PC-3 (cell line): ENCODE measurements at regions of chr1 and their contacts with region 1.

Region 1: DNA sequence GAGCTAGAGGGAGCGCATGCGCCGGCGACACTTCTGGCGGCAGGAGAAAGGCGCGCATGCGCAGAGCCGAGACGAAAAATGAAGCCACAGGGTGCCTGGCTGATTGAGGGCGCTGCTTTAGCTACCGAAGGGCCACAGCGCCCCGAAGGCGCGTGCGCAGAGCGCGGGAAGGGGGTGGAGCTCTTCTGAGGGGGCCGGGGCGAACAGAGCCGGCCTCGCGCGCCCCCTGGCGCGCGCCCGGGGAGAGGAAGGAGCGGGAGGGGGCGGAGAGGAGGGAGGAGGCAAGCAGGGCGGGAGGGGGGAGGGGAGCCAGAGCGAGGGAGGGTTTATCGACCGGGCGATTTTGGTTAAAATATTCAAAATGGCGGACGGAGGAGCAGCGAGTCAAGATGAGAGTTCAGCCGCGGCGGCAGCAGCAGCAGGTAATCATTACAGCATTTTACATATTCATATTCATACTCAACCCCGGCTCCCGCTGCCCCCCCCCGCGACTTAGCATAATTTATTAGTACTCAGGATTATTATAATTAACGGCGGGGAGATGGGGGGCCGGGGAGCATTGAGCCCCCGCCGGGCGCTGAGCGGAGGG is at the start of gene POU2F1:
- DNase-seq: peak; percentile 100
- ATAC-seq: peak; percentile 76
- H3K4me3 ChIP-seq: peak within 1 kb of the TSS; percentile 94
- H3K27ac ChIP-seq: peak within 1 kb of the TSS; percentile 97
- H3K4me1 ChIP-seq: peaks cover 28% of the 10 kb centered on the region
- H3K27me3 ChIP-seq: no peaks in the 10 kb centered on the region
- CTCF ChIP-seq: peak; percentile 69
- total RNA-seq, gene POU2F1: 8.7 and 17.9 TPM in 2 replicates

Region 2: DNA sequence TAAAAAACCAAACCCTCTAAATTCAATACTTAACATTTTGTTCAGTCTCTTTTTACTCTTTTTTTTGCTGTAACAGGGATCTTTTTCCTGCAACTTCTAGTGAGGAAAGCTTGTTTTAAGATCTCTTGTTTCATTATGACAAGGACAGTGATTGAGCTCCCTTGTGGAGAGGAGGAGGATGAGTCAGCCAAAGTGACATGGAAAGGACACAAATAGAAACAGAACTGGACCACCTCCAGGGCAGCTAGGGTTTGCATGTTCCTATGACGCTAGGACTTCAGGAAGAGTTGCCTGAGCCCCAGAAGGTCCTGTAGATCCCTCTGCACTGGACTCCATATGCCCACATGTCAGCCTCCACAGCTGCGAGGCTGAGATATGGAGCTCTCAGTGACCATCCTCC is 841.2 kb before region 1 on chr1:
- CTCF ChIA-PET with region 1: no interaction called
- POLR2A ChIA-PET with region 1: no interaction called
- intact Hi-C with region 1: no loop called
- DNase-seq: peak; percentile 37
- ATAC-seq: no peak
- H3K4me3 ChIP-seq: no peak overlapping the region
- H3K27ac ChIP-seq: no peak overlapping the region
- H3K4me1 ChIP-seq: peaks cover 6% of the 10 kb centered on the region; the same call in 1 of the 2 replicates
- H3K27me3 ChIP-seq: peaks cover 35% of the 10 kb centered on the region; the same call in 1 of the 2 replicates
- CTCF ChIP-seq: no peak

Region 3: DNA sequence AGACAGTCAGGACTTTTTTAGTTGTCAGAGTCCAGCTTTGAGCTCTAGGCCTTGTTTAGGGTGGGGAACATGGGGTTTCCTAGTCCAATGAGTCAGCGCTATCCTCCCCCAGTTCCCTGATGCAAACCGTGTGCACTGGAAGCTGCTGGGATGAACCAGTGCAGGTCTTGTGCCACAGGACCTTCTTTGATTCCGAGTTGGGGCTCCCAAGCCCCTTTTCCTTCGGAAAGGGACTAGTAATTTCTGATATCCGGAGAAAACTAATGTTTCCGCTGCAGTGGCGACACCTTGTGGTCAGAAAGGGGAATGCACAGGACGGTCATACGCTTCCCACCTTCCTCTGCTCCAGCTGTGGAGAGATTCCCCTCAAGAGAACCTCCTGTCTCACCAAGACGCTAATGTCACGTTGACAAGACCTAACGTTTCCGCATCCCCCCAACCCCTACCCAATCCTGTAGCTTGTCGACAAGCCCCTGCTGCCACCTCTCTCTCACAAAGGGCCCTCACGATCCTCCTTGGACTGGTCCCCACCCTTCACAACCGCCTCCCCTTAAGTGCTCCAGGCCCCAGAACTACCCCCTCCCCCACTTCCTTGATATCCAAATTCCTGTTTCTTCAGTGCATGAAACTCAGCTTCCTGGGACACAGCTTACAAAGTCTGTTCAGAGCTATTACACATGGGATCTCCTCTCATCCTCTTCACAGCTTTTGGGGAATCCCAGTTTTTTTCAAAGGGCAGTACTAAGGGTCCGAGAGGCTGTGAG is 161.4 kb before region 1 on chr1:
- CTCF ChIA-PET with region 1: interaction called, 16 read pairs
- POLR2A ChIA-PET with region 1: interaction called, 3 read pairs
- intact Hi-C with region 1: no loop called
- DNase-seq: peak; percentile 90
- ATAC-seq: peak; percentile 52
- H3K4me3 ChIP-seq: peak overlapping the region; percentile 28; the same call in 1 of the 2 replicates
- H3K27ac ChIP-seq: no peak overlapping the region
- H3K4me1 ChIP-seq: peaks cover 14% of the 10 kb centered on the region
- H3K27me3 ChIP-seq: no peaks in the 10 kb centered on the region
- CTCF ChIP-seq: peak; percentile 97

Region 4: GRCh38 chr1:167095368-167095767 is 125.3 kb before region 1 on chr1:
- CTCF ChIA-PET with region 1: interaction called, 10 read pairs
- POLR2A ChIA-PET with region 1: no interaction called
- intact Hi-C with region 1: no loop called
- DNase-seq: peak; percentile 96
- ATAC-seq: peak; percentile 89
- H3K4me3 ChIP-seq: peak overlapping the region; percentile 5; the same call in 1 of the 2 replicates
- H3K27ac ChIP-seq: peak overlapping the region; percentile 10; the same call in 1 of the 2 replicates
- H3K4me1 ChIP-seq: peaks cover 20% of the 10 kb centered on the region
- H3K27me3 ChIP-seq: no peaks in the 10 kb centered on the region
- CTCF ChIP-seq: no peak

Region 5: DNA sequence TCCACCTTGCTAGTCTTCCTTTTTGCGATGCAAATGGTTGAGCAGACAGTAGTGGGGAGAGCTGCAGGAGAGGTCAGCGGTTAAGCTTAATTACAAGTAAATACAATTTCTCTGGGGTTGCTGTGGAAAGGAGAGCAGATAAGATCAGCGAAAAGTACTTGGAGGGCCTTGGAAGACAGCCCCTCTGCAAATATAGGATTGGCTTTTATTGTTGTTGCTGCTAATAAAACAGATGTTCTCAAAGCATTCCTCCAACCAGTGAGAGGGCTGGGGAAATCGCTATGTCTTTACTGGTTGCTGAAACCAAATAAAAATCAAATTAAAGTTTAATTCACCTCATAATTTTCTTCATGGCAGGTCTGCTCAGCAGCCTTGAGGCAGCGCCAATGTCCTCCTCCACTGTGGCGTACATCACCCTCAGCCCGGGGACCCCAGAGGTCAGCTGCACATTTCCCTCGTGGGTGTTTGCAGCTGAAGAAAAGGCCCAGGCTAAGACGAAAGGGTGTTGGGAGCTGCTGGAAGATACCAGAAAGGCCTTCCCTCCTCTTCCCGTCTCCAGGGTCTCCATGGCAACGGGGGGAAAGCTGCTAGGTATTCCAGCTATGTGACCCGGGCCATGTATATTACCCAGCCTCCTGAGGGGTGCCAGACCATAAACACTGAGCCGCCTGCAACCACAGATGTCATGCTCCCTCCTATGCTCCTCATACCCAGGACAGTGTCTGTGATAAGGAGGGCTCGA is 54.5 kb before region 1 on chr1:
- CTCF ChIA-PET with region 1: interaction called, 6 read pairs
- POLR2A ChIA-PET with region 1: interaction called, 13 read pairs
- intact Hi-C with region 1: no loop called
- DNase-seq: no peak
- ATAC-seq: no peak; the same call in 1 of the 2 replicates
- H3K4me3 ChIP-seq: no peak overlapping the region
- H3K27ac ChIP-seq: no peak overlapping the region
- H3K4me1 ChIP-seq: peaks cover 32% of the 10 kb centered on the region
- H3K27me3 ChIP-seq: no peaks in the 10 kb centered on the region
- CTCF ChIP-seq: no peak

Region 6: GRCh38 chr1:167401260-167401873 is 180.7 kb after region 1 on chr1:
- CTCF ChIA-PET with region 1: interaction called, 4 read pairs
- POLR2A ChIA-PET with region 1: no interaction called
- intact Hi-C with region 1: loop called (anchors 2 kb)
- DNase-seq: peak; percentile 81
- ATAC-seq: peak; percentile 89
- H3K4me3 ChIP-seq: no peak overlapping the region
- H3K27ac ChIP-seq: no peak overlapping the region
- H3K4me1 ChIP-seq: peaks cover 28% of the 10 kb centered on the region
- H3K27me3 ChIP-seq: no peaks in the 10 kb centered on the region
- CTCF ChIP-seq: peak; percentile 92

Region 7: DNA sequence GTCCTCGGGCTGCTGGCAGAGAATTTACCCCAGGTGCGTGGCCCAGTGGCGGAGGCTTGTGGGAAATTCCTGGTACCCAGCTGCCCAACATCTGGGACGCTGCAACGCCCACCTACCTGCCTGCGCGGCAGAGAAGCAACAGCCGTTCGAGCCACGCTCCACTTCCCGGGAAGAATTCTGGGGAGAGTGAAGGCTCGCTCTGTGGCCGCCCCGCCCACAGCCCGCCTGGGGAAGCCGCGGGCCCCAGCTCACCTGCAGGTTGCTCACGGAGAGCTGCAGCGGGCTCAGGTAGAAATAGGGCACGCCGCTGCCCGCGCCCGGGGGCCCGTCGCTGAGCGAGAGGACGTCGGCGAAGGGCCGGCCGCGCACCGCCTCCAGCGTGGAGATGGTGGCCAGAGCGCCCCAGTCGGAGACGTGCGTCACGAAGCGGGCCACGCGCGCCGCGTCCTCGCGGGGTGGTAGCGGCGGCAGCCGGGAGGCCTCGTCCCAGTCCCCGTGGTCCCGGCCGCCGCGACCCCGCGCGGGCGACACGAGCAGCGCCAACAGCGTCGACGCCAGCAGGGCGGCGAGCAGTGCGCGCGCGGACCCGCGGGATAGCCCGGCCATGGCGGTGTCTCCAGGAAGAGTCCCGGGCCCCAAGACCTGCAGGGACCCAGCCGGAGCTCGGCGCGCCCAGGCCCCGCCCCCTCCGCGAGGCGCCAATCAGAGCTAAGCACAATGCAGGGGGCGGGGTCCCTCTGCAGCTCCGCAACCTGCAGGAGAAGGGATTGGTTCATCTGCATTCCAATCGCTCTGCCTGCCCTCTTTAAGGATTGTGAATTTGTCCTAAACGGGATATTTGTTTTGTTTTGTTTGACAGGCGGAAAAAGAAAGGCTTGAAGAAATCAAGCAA is 332.8 kb after region 1 on chr1 and contains the start of gene CREG1:
- CTCF ChIA-PET with region 1: interaction called, 16 read pairs
- POLR2A ChIA-PET with region 1: interaction called, 10 read pairs
- intact Hi-C with region 1: no loop called
- DNase-seq: peak; percentile 97
- ATAC-seq: peak; percentile 99
- H3K4me3 ChIP-seq: peak within 1 kb of the TSS; percentile 74
- H3K27ac ChIP-seq: no peak within 1 kb of the TSS
- H3K4me1 ChIP-seq: peaks cover 14% of the 10 kb centered on the region; the same call in 1 of the 2 replicates
- H3K27me3 ChIP-seq: no peaks in the 10 kb centered on the region
- CTCF ChIP-seq: no peak
- total RNA-seq, gene CREG1: 55.7 and 63.9 TPM in 2 replicates